ENCODE measurements at regions of chr3 and their contacts with region 1.

Region 1: DNA sequence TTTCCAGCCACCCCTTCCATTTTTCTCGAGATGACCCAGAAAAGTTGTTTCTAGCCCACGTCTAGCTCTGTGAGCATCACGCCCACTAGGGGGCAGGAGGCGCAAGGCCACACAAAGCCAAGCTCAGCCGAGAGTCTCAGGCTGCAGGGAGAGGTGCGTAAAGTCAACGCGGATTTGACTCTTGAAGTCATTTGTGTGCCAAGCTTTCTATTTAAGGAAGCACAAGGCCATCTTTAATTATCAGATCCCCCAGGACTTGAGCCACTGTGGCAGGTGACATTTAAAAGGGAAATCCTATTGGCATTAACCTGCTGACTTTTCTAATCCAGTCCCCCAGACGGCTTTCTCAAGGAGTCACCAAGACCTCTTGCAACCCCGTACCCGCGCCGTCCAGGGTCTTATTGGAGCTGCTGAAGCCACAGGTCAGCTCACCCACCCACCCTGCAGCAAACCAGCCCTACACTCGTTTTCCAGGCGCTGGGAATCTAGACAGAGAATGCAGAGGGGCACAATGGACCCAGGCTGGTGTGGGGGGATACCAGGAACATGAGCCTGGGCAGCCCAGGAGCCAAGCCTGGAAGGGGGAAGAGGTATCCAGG is 62.1 kb downstream of the CAPN7 start:
- DNase-seq: peak; percentile 91
- ATAC-seq: peak; percentile 66
- H3K4me3 Mint-ChIP-seq: no peak overlapping the region
- H3K27ac Mint-ChIP-seq: peak overlapping the region; percentile 21
- H3K4me1 Mint-ChIP-seq: peaks cover 66% of the 10 kb centered on the region
- H3K27me3 Mint-ChIP-seq: no peaks in the 10 kb centered on the region

Region 2: DNA sequence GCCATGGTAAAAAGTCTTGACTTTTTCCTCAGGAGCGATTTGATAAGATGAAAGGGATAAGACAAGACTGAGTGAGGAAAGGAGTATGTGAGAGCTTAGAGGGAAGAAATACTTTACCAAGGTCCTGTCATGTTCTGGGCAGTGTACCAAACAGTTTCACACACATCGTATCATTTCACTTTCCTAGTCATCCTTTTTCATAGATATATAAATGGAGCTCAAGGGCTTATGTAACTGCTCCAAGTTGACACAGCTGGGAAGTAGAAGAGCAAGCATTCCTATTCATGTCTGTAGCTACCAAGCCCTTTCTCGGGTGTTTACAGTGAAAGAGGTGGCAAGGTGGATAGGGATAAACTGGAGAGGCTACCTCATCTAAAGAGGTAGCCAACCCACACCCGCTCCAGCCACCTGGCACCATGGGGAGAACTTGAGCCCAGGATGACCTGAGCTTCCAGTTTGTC is 260.4 kb before region 1 on chr3:
- CTCF ChIA-PET with region 1: no interaction called
- DNase-seq: no peak
- ATAC-seq: no peak
- H3K4me3 Mint-ChIP-seq: no peak overlapping the region
- H3K27ac Mint-ChIP-seq: no peak overlapping the region
- H3K4me1 Mint-ChIP-seq: peaks cover 2% of the 10 kb centered on the region
- H3K27me3 Mint-ChIP-seq: no peaks in the 10 kb centered on the region

Region 3: GRCh38 chr3:15284121-15284889 is 16.2 kb after region 1 on chr3:
- CTCF ChIA-PET with region 1: interaction called, 58 read pairs
- DNase-seq: no peak
- ATAC-seq: no peak
- H3K4me3 Mint-ChIP-seq: no peak overlapping the region
- H3K27ac Mint-ChIP-seq: no peak overlapping the region
- H3K4me1 Mint-ChIP-seq: peaks cover 27% of the 10 kb centered on the region
- H3K27me3 Mint-ChIP-seq: no peaks in the 10 kb centered on the region

Region 4: GRCh38 chr3:15309662-15310335 is 41.7 kb after region 1 on chr3:
- CTCF ChIA-PET with region 1: interaction called, 19 read pairs
- DNase-seq: peak; percentile 69
- ATAC-seq: peak; percentile 28
- H3K4me3 Mint-ChIP-seq: peak overlapping the region; percentile 54
- H3K27ac Mint-ChIP-seq: peak overlapping the region; percentile 92
- H3K4me1 Mint-ChIP-seq: peaks cover 67% of the 10 kb centered on the region
- H3K27me3 Mint-ChIP-seq: no peaks in the 10 kb centered on the region

Region 5: DNA sequence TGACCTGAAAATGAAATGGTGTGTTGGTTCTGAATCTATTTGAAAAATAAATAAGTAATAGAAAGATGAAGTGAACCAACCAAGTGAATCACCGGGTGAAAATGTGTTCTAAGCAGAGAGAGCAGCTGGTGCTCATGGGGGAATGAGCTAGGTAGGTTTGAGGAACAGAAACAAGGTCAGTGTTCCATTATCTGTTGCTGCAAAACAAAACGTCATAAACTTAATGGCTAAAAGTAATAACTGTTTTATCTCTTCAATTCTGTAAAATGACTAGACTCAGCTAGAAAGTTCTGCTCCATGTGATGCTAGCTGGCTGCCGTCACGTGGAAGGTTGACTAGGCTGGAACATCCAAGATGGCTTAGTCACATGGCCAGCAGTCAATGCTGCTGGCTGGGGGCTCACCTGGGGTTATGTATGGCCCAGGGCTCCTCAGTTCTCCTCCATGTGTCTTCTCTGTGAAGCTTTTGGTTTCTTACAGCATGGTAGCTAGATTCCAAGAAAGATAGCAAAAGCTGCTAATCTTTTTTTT is 77.5 kb after region 1 on chr3:
- CTCF ChIA-PET with region 1: interaction called, 11 read pairs
- DNase-seq: no peak
- ATAC-seq: no peak
- H3K4me3 Mint-ChIP-seq: no peak overlapping the region
- H3K27ac Mint-ChIP-seq: no peak overlapping the region
- H3K4me1 Mint-ChIP-seq: peaks cover 29% of the 10 kb centered on the region
- H3K27me3 Mint-ChIP-seq: peaks cover 12% of the 10 kb centered on the region

Region 6: DNA sequence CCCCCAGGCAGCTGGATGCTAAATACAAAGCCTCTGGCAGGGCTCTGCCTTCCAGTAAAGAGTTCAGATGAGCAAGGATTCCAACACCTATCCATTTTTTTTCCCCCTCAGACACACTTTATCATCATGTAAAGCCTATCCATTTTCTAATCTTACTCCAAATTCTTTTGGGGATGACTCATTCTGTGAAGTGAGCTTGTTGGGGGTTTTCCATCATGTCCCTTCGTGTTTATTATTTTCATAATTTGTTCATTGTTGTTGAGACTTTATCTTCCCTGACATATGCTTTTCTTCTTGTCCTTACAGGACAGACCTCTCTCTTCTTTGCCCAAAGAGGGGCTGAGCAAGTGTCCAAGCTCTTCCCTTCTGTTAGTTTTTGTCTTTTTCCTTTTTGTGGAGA is 98.9 kb after region 1 on chr3:
- CTCF ChIA-PET with region 1: interaction called, 30 read pairs
- DNase-seq: no peak
- ATAC-seq: no peak
- H3K4me3 Mint-ChIP-seq: no peak overlapping the region
- H3K27ac Mint-ChIP-seq: no peak overlapping the region
- H3K4me1 Mint-ChIP-seq: peaks cover 28% of the 10 kb centered on the region
- H3K27me3 Mint-ChIP-seq: no peaks in the 10 kb centered on the region

Region 7: DNA sequence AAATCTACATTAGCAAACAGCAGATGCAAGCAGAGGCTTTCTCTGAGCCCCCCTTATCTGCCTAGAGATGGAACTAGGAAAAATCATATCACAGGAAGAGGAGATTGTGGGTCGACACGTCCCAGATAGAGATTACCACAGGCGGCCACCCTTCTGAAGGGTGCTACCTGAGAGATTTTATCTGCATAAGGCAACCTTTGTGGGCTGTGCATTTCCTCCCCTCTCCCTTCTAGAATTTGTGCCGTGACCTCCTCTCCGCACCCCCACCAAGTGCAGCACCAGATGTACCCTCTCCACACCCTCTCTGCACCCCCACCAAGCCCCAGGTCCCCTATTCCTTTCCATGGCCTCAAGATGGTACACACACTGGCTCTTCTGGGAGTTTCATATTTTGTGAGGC is 131.8 kb after region 1 on chr3:
- CTCF ChIA-PET with region 1: interaction called, 96 read pairs
- DNase-seq: peak; percentile 43
- ATAC-seq: peak; percentile 80
- H3K4me3 Mint-ChIP-seq: no peak overlapping the region
- H3K27ac Mint-ChIP-seq: no peak overlapping the region
- H3K4me1 Mint-ChIP-seq: peaks cover 36% of the 10 kb centered on the region
- H3K27me3 Mint-ChIP-seq: peaks cover 5% of the 10 kb centered on the region